A549 (cell line): ENCODE measurements at regions of chr5 and their contacts with region 1.

Region 1: GRCh38 chr5:147369742-147370374 is 135.0 kb downstream of the STK32A start:
- DNase-seq: peak; percentile 15 to 20
- ATAC-seq: peak; percentile 47 to 66; a peak in 2 of 6 replicates
- H3K4me3 ChIP-seq: no peak overlapping the region
- H3K27ac ChIP-seq: no peak overlapping the region
- H3K4me1 ChIP-seq: no peaks in the 10 kb centered on the region
- CTCF ChIP-seq: peak; percentile 64
- EP300 ChIP-seq: no peak
- POLR2A ChIP-seq: no peak
- RAD21 ChIP-seq: peak; percentile 76 to 84

Region 2: DNA sequence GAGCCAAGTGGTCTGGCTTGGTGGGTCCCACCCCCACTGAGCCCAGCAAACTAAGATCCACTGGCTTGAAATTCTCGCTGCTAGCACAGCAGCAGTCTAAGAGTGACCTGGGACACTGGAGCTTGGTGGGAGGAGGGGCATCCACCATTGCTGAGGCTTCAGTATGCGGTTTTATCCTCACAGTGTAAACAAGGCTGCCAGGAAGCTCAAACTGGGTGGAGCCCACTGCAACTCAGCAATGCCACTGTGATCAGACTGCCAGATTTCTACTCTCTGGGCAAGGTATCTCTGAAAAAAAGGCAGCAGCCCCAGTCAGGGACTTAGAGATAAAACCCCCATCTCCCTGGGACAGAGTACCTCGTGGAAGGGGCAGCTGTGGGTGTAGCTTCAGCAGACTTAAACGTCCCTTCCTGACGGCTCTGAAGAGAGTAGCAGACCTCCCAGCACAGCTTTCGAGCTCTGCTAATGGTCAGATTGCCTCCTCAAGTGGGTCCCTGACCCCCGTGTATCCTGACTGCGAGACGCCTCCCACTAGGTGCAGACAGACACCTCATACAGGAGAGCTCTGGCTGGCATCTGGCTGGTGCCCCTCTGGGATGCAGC is 153.2 kb before region 1 on chr5:
- CTCF ChIA-PET with region 1: interaction called, 10 read pairs
- POLR2A ChIA-PET with region 1: no interaction called
- DNase-seq: no peak
- ATAC-seq: peak in 1 of 2 experiments; percentile 41; a peak in 2 of 6 replicates
- H3K4me3 ChIP-seq: no peak overlapping the region
- H3K27ac ChIP-seq: no peak overlapping the region
- H3K4me1 ChIP-seq: no peaks in the 10 kb centered on the region
- CTCF ChIP-seq: no peak
- EP300 ChIP-seq: no peak
- POLR2A ChIP-seq: no peak
- RAD21 ChIP-seq: no peak

Region 3: DNA sequence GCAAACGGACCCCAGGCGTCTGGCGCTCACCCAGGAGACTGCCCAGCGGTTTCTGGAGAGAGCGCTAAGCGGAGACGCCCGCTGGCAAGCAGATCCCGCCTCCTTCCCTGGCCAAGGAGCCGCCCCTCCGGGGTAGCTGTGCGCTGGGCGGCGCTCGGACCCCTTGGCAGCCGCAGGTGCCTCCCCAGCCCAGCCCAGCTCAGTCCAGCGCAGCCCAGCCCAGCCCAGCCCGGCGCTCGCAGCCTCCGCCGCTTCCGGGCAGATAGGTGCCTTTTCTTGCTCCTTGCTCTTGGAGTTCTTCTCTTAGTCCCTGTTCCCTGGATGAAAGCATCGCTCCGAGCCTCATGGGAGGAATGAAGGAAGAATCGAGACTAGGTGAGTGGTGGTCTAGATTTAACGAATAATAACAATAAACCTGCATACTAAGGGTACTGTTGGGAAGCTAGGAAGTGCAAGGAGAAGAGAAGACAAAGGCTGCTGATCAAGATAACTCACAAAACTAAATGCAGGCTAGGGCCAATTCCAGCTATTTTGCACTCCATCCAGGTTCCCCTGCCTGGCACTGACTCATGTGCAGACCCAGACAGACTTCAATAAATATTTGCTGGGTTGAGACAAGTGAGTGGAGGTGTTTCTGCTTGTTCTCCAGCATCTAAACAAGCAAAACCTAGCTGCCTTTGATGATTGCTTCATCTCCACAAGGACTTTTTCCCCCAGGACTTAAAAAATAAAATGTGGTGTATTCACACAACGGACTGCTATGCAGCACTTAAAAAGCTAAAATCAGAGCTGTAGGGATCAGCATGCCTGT is 134.8 kb before region 1 on chr5 and contains the start of gene STK32A:
- CTCF ChIA-PET with region 1: interaction called, 10 read pairs
- POLR2A ChIA-PET with region 1: interaction called, 4 read pairs
- DNase-seq: peak in 1 of 2 experiments; percentile 42
- ATAC-seq: peak; percentile 89 to 97
- H3K4me3 ChIP-seq: peak within 1 kb of the TSS; percentile 50
- H3K27ac ChIP-seq: peak within 1 kb of the TSS; percentile 16 to 68; a peak in 4 of 6 replicates
- H3K4me1 ChIP-seq: no peaks in the 10 kb centered on the region; the same call in 2 of the 3 replicates
- CTCF ChIP-seq: no peak
- EP300 ChIP-seq: no peak
- POLR2A ChIP-seq: no peak
- RAD21 ChIP-seq: peak; percentile 20 to 53; a peak in 4 of 5 replicates
- polyA plus RNA-seq, gene STK32A: 1.2 and 1.6 TPM in 2 replicates

Region 4: GRCh38 chr5:147391781-147392180 is 21.9 kb after region 1 on chr5:
- CTCF ChIA-PET with region 1: interaction called, 19 read pairs
- POLR2A ChIA-PET with region 1: no interaction called
- DNase-seq: peak; percentile 48 to 56
- ATAC-seq: peak; percentile 95 to 98
- H3K4me3 ChIP-seq: no peak overlapping the region
- H3K27ac ChIP-seq: no peak overlapping the region
- H3K4me1 ChIP-seq: no peaks in the 10 kb centered on the region
- CTCF ChIP-seq: peak; percentile 33; the same call in 2 of the 3 replicates
- EP300 ChIP-seq: no peak
- POLR2A ChIP-seq: no peak
- RAD21 ChIP-seq: peak; percentile 38 to 55; a peak in 4 of 5 replicates